AG04450 (cell line): ENCODE measurements at regions of chr20 and their contacts with region 1.

Region 1: DNA sequence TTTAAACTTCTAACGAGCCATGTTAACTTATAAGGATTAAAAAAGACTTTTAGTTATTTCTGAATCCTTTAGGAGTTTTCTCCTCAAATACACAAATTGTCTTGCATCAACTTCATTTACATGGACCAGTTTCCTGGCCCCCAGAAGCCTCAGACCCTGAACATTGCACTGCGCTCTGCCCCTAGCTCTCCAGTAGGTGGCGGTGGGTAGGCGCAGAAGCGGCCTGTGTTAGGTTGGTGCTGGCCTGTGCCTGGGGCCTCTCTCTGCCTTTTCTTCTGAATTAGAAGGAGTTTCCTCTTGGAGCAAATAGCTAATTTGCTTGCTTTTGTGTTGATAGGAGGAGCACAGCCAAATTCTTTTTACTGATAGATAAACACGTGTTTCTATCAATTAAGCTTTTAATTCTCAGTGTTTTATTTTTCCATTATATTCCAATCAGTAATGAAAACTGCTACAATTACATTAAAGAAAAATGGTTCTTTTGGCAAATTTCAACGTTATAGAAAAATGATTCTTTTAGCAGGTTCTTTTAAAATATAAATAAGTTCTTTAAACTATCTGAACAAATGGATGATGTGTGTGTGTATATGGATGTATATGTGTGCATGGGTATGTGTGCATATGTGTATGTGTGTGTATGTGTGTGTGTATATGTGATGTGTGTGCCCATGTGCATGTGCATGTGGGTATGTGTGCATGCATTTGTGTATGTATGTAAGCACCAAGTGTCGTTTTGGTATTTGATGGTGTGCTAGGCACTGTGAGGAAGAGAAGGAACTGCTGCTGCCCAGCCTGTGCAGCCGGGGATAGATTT is 44.5 kb downstream of the DTD1 start:
- DNase-seq: peak; percentile 15
- H3K4me3 ChIP-seq: no peak overlapping the region
- H3K27ac ChIP-seq: no peak overlapping the region
- H3K27me3 ChIP-seq: no peaks in the 10 kb centered on the region
- CTCF ChIP-seq: peak; percentile 99

Region 2: DNA sequence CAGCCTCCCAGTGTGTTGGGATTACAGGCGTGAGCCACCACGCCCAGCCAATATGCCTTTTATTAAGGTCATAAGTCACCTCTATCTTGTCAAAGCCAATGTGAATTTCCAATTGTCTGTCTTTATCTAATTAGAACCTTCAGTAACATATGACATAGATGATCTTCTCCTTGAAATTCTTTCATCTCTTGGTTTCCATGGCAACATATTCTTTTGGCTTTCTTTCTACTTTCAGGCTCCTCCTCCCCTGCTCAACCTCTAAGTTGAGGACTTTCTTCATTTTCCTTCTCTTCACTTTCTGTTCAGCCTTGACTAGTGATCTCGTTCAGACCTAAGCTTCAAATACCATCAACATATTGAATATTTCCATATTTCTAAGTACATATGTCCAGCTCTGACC is 181.2 kb before region 1 on chr20:
- CTCF ChIA-PET with region 1: no interaction called
- POLR2A ChIA-PET with region 1: no interaction called
- DNase-seq: no peak
- H3K4me3 ChIP-seq: no peak overlapping the region
- H3K27ac ChIP-seq: no peak overlapping the region
- H3K27me3 ChIP-seq: no peaks in the 10 kb centered on the region
- CTCF ChIP-seq: no peak

Region 3: GRCh38 chr20:18645851-18646250 is 13.4 kb after region 1 on chr20:
- CTCF ChIA-PET with region 1: interaction called, 17 read pairs
- POLR2A ChIA-PET with region 1: no interaction called
- DNase-seq: no peak
- H3K4me3 ChIP-seq: no peak overlapping the region
- H3K27ac ChIP-seq: no peak overlapping the region
- H3K27me3 ChIP-seq: no peaks in the 10 kb centered on the region
- CTCF ChIP-seq: no peak

Region 4: GRCh38 chr20:18669620-18670019 is 37.2 kb after region 1 on chr20:
- CTCF ChIA-PET with region 1: interaction called, 12 read pairs
- POLR2A ChIA-PET with region 1: no interaction called
- DNase-seq: no peak
- H3K4me3 ChIP-seq: no peak overlapping the region
- H3K27ac ChIP-seq: no peak overlapping the region
- H3K27me3 ChIP-seq: no peaks in the 10 kb centered on the region
- CTCF ChIP-seq: no peak

Region 5: DNA sequence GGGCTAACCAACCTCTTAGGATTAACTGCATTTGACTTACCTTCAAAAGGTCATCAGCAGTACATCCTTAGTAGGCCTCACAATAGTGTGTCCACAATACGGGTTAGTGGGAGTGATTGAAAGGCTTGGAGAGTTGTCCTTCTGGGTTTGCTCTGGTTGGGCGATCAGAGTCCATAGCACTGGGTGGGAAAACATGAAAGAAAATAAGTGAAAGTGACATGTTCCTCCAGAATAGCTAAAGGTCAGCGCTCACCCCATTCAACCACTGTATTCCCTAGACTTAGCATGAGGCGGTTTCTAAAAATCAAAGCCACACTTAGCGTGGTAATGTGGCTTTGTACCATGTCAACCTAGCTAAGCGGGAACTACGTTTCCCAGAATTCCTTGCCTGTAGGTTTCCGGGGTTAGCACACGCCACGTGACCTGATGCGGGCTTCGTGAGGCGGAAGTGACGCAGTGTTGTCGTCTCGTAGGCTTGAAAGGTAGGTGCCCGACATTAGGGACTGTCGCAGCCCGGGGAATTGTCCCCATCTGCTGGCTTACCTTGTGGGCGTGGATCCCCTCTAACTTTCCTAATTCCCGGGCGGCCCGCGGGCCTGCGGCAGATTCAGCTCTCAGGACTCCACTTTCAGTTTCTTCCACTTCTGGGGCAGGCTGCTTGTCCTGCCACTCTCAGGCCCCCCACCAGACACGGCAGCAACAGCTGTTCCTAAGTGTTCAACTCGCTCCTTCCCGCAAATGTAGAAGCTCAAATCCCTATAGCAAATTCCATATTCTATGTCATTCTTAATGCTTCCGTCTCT is 161.4 kb after region 1 on chr20:
- CTCF ChIA-PET with region 1: interaction called, 13 read pairs
- POLR2A ChIA-PET with region 1: no interaction called
- DNase-seq: peak; percentile 58
- H3K4me3 ChIP-seq: peak overlapping the region; percentile 89
- H3K27ac ChIP-seq: peak overlapping the region; percentile 78
- H3K27me3 ChIP-seq: no peaks in the 10 kb centered on the region
- CTCF ChIP-seq: no peak

Region 6: DNA sequence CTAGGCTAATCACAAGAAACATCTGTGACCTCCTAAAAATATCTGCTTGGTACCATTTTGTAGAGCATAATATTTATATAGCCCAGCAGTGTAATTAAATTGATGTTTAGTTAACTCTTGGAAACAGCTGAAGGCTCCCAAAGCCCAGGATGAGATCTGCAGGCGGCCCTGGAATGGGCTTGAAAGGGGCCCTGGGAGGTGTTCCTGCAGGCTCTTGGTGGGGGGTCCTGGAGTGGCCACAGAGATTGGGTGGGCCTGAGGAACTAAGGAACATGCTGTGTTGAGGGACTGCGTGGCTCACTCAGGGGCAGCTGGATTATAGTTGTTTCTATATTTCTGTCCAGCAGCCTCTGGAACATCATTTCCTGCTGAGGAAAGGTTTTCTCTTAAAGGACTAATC is 190.4 kb after region 1 on chr20:
- CTCF ChIA-PET with region 1: no interaction called
- POLR2A ChIA-PET with region 1: no interaction called
- DNase-seq: no peak
- H3K4me3 ChIP-seq: no peak overlapping the region
- H3K27ac ChIP-seq: no peak overlapping the region
- H3K27me3 ChIP-seq: no peaks in the 10 kb centered on the region
- CTCF ChIP-seq: no peak

Region 7: GRCh38 chr20:19661717-19662636 is 1029.6 kb after region 1 on chr20:
- CTCF ChIA-PET with region 1: interaction called, 20 read pairs
- POLR2A ChIA-PET with region 1: no interaction called
- DNase-seq: peak; percentile 42
- H3K4me3 ChIP-seq: no peak overlapping the region
- H3K27ac ChIP-seq: no peak overlapping the region
- H3K27me3 ChIP-seq: peaks cover 31% of the 10 kb centered on the region
- CTCF ChIP-seq: peak; percentile 98